ENCODE measurements at regions of chr15 and their contacts with region 1.

Region 1: DNA sequence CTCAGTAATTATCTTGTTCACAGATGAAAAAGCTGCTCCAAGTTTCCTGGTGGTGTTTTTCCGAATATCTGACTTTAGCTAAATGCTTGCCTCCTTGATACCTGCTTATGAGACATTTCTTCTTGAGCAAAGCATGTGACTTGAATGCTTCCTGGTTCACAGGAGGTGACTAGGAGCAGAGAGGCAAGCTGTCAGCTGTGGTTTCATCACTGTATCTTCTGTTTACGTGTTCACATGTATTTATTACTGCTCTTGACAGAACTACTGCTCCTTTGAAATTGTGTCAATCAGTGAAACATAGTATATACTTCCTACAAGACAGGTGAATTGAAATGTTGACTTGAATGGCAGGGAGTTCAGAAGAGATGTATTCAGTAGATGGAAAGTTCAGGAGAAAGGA is 8.9 kb upstream of the SPPL2A start:
- DNase-seq: no peak
- ATAC-seq: no peak
- H3K4me3 ChIP-seq: no peak overlapping the region
- H3K27ac ChIP-seq: no peak overlapping the region
- H3K4me1 ChIP-seq: no peaks in the 10 kb centered on the region
- H3K27me3 ChIP-seq: no peaks in the 10 kb centered on the region
- CTCF ChIP-seq: no peak

Region 2: DNA sequence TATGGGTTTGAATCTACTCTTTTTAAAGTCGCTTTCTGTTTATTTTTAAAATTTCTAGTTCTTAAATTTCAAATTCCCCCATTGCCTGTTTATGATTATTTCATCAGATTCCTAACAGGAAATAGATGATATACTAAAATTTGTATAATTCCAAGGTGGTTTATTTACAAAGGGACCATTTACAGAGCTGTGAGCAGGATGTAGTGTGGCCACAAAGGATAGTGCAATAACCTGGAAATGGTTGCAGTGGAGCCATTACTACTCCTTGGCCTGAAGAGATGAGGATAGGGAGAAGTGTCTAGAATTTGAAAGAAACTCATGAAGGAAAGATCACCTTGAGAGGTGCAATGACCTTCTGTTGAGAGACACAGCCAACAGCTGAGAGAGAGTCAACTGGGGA is 75.6 kb after region 1 on chr15:
- CTCF ChIA-PET with region 1: no interaction called
- POLR2A ChIA-PET with region 1: interaction called, 28 read pairs
- intact Hi-C with region 1: no loop called
- DNase-seq: no peak
- ATAC-seq: no peak
- H3K4me3 ChIP-seq: no peak overlapping the region
- H3K27ac ChIP-seq: no peak overlapping the region
- H3K4me1 ChIP-seq: no peaks in the 10 kb centered on the region
- H3K27me3 ChIP-seq: no peaks in the 10 kb centered on the region
- CTCF ChIP-seq: no peak

Region 3: GRCh38 chr15:51212909-51213308 is 438.5 kb after region 1 on chr15:
- CTCF ChIA-PET with region 1: no interaction called
- POLR2A ChIA-PET with region 1: no interaction called
- intact Hi-C with region 1: no loop called
- DNase-seq: no peak
- ATAC-seq: no peak
- H3K4me3 ChIP-seq: no peak overlapping the region
- H3K27ac ChIP-seq: no peak overlapping the region
- H3K4me1 ChIP-seq: no peaks in the 10 kb centered on the region
- H3K27me3 ChIP-seq: peaks cover 26% of the 10 kb centered on the region
- CTCF ChIP-seq: no peak